Activated B cell treated with CpG ODN at 0.5 μM for 24 hours (primary cell): ENCODE measurements at regions of chr1 and their contacts with region 1.

Region 1: DNA sequence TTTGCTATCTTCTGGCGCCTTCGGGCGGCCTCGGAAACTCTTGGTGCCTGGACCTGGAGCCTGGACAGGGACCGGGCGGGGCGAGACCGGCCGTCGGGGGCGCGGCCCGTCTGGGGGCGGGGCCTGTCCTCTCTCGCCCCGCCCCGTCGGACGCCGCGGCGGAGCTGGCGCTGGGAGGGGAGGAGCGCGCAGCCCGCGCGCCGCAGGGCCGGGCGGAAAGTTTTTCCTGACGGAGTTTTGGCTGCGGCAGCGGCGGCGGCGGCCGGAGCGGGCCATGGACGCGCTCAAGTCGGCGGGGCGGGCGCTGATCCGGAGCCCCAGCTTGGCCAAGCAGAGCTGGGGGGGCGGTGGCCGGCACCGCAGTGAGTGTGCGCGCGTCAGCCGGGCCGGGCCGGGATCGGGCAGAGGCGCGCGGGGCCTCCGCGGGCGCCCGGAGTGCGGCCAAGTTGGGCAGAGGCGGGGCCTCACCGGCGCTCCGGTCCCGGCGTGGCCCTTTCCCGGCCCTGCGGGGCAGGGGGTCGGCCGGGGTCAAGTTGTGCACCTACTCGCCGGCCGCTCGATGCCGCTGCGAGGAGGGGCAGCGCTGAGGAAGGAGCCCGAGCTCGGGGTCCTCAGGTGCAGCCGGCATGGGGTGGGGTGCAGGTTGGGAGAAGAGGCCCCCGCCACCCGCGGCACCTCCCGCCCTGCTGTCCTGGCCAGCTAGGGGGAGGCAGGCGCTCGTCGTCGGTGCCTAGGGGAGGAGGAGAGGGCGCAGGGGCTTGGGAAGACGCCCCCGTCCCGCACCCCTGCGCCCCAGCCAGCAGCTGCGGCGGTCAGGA is at the start of gene LDLRAP1:
- DNase-seq: peak; percentile 69
- ATAC-seq: peak; percentile 97
- H3K4me3 Mint-ChIP-seq: peak within 1 kb of the TSS; percentile 74
- H3K27ac Mint-ChIP-seq: no peak within 1 kb of the TSS
- H3K4me1 Mint-ChIP-seq: peaks cover 36% of the 10 kb centered on the region
- H3K27me3 Mint-ChIP-seq: peaks cover 1% of the 10 kb centered on the region
- CTCF ChIP-seq: no peak
- total RNA-seq, gene LDLRAP1: 8.7 and 10.8 TPM in 2 replicates

Region 2: DNA sequence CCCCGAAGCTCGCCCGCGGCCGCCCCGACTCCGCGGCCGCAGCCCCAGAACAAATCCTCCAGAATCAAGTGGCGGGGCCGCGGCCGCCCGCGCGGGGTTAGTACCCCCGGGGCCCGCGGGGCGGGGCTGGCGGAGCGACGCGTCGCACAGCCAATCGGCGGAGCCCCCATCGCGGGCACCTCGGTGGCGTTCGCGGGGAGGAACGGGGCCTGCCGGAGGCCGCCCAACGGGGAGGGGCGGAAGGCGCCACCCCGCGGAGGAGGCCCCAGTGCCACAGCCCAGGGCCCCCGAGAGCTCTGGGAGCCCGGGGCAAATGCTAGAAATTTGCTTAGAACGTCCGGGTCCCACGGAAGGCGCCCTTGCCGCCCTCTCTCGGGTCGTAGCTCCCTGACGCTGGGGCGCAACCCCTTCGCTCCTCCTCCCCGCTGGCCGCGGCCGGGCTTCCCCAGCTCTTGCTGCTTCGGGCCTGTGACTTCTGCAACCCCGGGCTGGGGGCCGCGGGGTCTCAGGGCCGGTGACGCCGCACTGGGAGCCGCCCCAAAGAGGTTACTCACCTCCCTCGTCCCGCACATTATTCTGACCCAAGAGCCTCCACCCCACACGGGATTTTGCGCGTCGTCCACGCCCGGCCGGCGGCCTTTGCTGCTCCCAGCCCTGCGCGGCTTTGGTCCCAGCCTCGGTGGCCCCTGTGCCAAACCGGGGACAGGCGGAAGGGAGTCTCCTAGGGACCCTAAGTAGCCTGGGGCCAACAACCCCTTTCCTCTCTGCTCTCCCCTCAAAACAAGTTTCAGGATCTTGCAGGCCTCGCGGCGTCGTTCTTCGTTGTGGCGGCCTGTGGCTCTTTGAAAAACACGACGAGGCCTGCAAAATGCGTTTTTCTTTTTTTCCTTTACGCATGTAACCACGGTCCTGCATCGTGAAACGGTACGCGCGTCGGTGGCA is 613.2 kb before region 1 on chr1 and contains the start of gene RUNX3:
- CTCF ChIA-PET with region 1: no interaction called
- POLR2A ChIA-PET with region 1: no interaction called
- intact Hi-C with region 1: no loop called
- DNase-seq: peak; percentile 94
- ATAC-seq: peak; percentile 87
- H3K4me3 Mint-ChIP-seq: peak within 1 kb of the TSS; percentile 98
- H3K27ac Mint-ChIP-seq: peak within 1 kb of the TSS; percentile 96
- H3K4me1 Mint-ChIP-seq: peaks cover 73% of the 10 kb centered on the region
- H3K27me3 Mint-ChIP-seq: no peaks in the 10 kb centered on the region
- CTCF ChIP-seq: no peak
- total RNA-seq, gene RUNX3: 141 and 153 TPM in 2 replicates

Region 3: DNA sequence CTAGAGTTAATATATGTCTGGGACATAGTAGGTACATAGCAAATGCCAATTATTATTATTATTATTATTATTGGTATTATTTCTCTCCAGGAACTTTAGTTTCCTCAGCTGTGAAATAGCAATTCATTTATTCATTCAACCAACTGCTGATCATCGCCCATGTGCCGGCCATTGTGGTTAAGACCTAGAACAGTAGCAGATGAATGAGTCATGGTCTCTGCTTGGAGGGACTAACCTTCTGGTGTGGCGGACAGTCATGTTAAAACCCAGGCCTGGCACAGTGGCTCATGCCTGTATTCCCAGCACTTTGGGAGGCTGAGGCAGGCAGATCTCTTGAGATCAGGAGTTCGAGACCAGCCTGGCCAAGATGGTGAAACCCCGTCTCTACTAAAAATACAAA is 24.0 kb before region 1 on chr1:
- CTCF ChIA-PET with region 1: no interaction called
- POLR2A ChIA-PET with region 1: no interaction called
- intact Hi-C with region 1: no loop called
- DNase-seq: no peak
- ATAC-seq: no peak
- H3K4me3 Mint-ChIP-seq: no peak overlapping the region
- H3K27ac Mint-ChIP-seq: no peak overlapping the region
- H3K4me1 Mint-ChIP-seq: peaks cover 9% of the 10 kb centered on the region
- H3K27me3 Mint-ChIP-seq: peaks cover 3% of the 10 kb centered on the region
- CTCF ChIP-seq: no peak

Region 4: DNA sequence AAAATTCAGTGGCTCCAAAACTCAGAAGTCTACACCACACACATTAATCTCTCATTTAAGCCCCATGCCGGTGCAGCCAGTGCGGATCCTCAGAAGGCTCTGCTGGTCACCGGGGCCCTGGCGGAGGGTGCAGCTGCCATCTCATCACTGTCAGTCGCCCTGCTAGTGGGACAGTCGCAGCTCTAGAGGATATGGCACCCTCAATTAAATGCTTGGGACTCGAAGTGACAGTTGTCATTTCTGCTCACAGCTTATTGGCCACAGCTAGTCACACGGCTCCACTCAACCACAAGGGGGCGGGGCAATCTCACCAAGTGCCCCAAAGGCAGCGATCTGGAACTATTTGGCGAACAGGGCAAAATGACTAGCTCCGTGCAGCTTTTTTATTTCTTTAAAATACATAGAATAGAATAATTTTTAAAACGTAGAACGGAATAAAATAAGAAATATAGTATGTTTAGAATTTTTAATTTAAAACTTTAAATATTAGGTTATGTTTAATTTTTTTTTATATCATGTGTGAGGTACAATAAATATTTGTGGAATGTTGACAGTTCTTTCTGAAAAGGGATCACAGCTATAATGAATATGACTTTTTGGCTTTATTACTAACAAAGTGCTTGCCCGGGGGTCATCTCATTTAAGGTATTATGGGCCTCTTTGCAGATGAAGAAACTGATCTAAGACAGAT is 65.0 kb after region 1 on chr1:
- CTCF ChIA-PET with region 1: no interaction called
- POLR2A ChIA-PET with region 1: no interaction called
- intact Hi-C with region 1: loop called (anchors 2 kb)
- DNase-seq: peak; percentile 67
- ATAC-seq: peak; percentile 99
- H3K4me3 Mint-ChIP-seq: no peak overlapping the region
- H3K27ac Mint-ChIP-seq: no peak overlapping the region
- H3K4me1 Mint-ChIP-seq: peaks cover 7% of the 10 kb centered on the region
- H3K27me3 Mint-ChIP-seq: peaks cover 20% of the 10 kb centered on the region
- CTCF ChIP-seq: no peak

Region 5: DNA sequence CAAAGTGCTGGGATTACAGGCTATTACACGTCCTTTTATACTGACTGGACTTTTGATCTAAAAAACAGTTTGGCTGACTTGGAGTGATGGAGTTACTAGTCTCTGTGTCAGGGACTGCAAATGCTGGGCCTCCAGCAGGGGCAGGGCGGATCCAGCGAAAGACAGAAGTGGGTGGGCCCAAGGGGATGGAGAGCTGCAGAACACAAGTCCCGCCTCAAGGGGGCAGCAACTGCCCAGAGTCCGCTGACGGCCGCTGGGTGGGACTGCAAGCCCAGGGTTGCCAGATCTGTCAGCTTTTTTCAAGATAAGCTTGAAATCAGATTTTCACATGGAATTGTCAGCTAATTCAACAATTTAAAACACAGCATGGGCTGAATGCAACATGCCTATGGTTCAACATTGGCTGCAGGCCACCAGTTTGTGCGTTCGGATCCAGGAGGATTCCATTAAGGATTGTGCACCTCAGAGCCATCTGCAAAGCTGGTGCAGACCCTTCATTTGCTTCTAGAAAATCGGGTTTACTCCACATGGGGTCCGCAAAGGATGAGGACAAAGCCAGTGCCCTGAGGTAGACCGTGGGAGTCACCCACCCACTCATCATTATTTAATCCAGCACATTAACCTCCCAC is 351.8 kb after region 1 on chr1:
- CTCF ChIA-PET with region 1: no interaction called
- POLR2A ChIA-PET with region 1: no interaction called
- intact Hi-C with region 1: no loop called
- DNase-seq: peak; percentile 80
- ATAC-seq: peak; percentile 100
- H3K4me3 Mint-ChIP-seq: peak overlapping the region; percentile 3
- H3K27ac Mint-ChIP-seq: peak overlapping the region; percentile 22
- H3K4me1 Mint-ChIP-seq: peaks cover 7% of the 10 kb centered on the region
- H3K27me3 Mint-ChIP-seq: no peaks in the 10 kb centered on the region
- CTCF ChIP-seq: peak; percentile 74